SK-N-SH (cell line): ENCODE measurements at regions of chr2 and their contacts with region 1.

Region 1: GRCh38 chr2:135997380-135997779 is 12.0 kb upstream of the DARS1 start:
- DNase-seq: peak; percentile 83
- H3K4me3 ChIP-seq: no peak overlapping the region
- H3K27ac ChIP-seq: peak overlapping the region in 1 of 2 experiments; percentile 5; a peak in 1 of 4 replicates
- H3K4me1 ChIP-seq: peaks cover 0 to 7% of the 10 kb centered on the region in 2 experiments; a peak in 1 of 4 replicates
- H3K27me3 ChIP-seq: no peaks in the 10 kb centered on the region
- CTCF ChIP-seq: no peak
- EP300 ChIP-seq: no peak
- RAD21 ChIP-seq: peak; percentile 90

Region 2: GRCh38 chr2:135829378-135830135 is 167.8 kb before region 1 on chr2:
- CTCF ChIA-PET with region 1: no interaction called
- POLR2A ChIA-PET with region 1: no interaction called
- DNase-seq: no peak
- H3K4me3 ChIP-seq: no peak overlapping the region
- H3K27ac ChIP-seq: no peak overlapping the region
- H3K4me1 ChIP-seq: no peaks in the 10 kb centered on the region; a peak in 1 of 4 replicates
- H3K27me3 ChIP-seq: no peaks in the 10 kb centered on the region
- CTCF ChIP-seq: no peak
- EP300 ChIP-seq: no peak
- RAD21 ChIP-seq: no peak

Region 3: GRCh38 chr2:135913727-135914365 is 83.5 kb before region 1 on chr2:
- CTCF ChIA-PET with region 1: interaction called, 20 read pairs
- POLR2A ChIA-PET with region 1: no interaction called
- DNase-seq: peak; percentile 21
- H3K4me3 ChIP-seq: no peak overlapping the region
- H3K27ac ChIP-seq: no peak overlapping the region
- H3K4me1 ChIP-seq: no peaks in the 10 kb centered on the region; a peak in 1 of 4 replicates
- H3K27me3 ChIP-seq: no peaks in the 10 kb centered on the region
- CTCF ChIP-seq: peak; percentile 88
- EP300 ChIP-seq: no peak
- RAD21 ChIP-seq: peak; percentile 73

Region 4: GRCh38 chr2:135985018-135985825 is 12.2 kb before region 1 on chr2 and contains the start of gene DARS1:
- CTCF ChIA-PET with region 1: interaction called, 25 read pairs
- POLR2A ChIA-PET with region 1: no interaction called
- DNase-seq: peak; percentile 95
- H3K4me3 ChIP-seq: peak within 1 kb of the TSS; percentile 66 to 98
- H3K27ac ChIP-seq: peak within 1 kb of the TSS; percentile 88 to 98
- H3K4me1 ChIP-seq: peaks cover 3 to 14% of the 10 kb centered on the region in 2 experiments; a peak in 3 of 4 replicates
- H3K27me3 ChIP-seq: no peaks in the 10 kb centered on the region
- CTCF ChIP-seq: no peak
- EP300 ChIP-seq: no peak
- RAD21 ChIP-seq: no peak; the same call in 1 of the 2 replicates
- polyA plus RNA-seq, gene DARS1: 52.2 and 68.8 TPM in 2 replicates

Region 5: DNA sequence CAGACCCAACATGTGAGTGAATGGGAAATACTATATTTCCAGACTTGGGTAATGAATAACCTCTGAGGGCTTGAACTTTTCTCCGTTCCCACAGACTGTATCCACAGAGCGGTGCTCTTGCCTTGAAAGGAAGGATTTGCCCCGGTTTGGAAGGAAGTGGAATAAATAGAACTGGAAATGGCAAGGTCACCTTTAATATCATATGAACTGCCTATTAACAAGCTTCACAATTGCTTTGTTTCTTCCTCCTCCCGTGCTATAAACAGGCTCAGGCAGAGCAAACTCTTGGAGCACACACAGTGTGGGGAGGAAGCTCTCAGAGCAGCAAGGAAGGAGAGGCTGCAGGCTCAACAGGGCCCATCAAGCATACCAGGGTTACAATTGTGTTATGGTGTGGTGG is 16.6 kb after region 1 on chr2:
- CTCF ChIA-PET with region 1: interaction called, 17 read pairs
- POLR2A ChIA-PET with region 1: no interaction called
- DNase-seq: no peak
- H3K4me3 ChIP-seq: no peak overlapping the region
- H3K27ac ChIP-seq: no peak overlapping the region
- H3K4me1 ChIP-seq: no peaks in the 10 kb centered on the region; a peak in 1 of 4 replicates
- H3K27me3 ChIP-seq: no peaks in the 10 kb centered on the region; the same call in 1 of the 2 replicates
- CTCF ChIP-seq: no peak
- EP300 ChIP-seq: no peak
- RAD21 ChIP-seq: no peak; the same call in 1 of the 2 replicates

Region 6: GRCh38 chr2:136068581-136069227 is 71.3 kb after region 1 on chr2:
- CTCF ChIA-PET with region 1: interaction called, 15 read pairs
- POLR2A ChIA-PET with region 1: interaction called, 5 read pairs
- DNase-seq: no peak
- H3K4me3 ChIP-seq: no peak overlapping the region
- H3K27ac ChIP-seq: peak overlapping the region in 1 of 2 experiments; percentile 92; a peak in 2 of 4 replicates
- H3K4me1 ChIP-seq: peaks cover 0 to 47% of the 10 kb centered on the region in 2 experiments; a peak in 2 of 4 replicates
- H3K27me3 ChIP-seq: no peaks in the 10 kb centered on the region
- CTCF ChIP-seq: no peak
- EP300 ChIP-seq: no peak
- RAD21 ChIP-seq: no peak

Region 7: DNA sequence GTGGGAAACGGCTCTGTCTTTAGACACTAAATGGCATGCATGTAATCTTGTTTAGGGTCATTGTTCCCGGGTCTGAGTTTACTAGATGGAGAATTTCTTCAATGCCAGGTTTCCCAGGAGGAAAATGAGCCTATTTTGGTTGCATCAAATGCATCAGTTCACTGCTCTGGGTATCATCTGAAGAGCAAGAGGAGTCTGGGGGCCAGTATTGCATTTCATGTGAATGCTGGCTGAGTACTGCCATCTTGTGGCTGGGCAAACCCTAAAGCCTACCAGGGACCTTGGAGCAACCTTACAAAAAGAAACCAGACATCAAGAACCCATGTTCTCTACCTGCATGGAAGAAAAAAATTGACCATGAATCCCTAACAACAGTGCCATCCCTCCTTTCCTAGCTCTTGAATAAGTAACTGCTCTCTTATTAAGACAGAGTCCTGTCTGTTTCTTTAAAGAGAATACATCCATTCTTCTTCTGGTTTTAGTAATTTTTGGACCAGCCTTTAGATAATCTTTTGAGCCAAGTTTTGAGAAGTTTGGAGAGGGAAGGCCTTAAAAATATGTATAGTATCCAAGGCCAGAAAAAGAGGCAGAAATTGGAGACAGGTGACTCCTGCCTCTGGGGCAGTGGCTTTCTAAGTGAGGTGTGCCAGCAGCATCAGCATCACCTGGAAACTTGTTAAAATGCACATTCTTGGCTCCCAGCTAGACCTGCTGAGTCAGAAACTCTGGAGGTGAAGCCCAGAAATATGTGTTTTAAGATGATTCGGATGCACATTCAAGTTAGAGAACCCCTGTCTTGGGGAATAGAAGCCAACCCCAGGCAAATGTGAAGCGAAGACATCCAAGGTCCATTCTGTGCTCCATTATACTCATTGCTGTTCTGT is 381.6 kb after region 1 on chr2:
- CTCF ChIA-PET with region 1: interaction called, 46 read pairs
- POLR2A ChIA-PET with region 1: interaction called, 3 read pairs
- DNase-seq: peak; percentile 61
- H3K4me3 ChIP-seq: no peak overlapping the region; a peak in 1 of 4 replicates
- H3K27ac ChIP-seq: no peak overlapping the region
- H3K4me1 ChIP-seq: no peaks in the 10 kb centered on the region; a peak in 2 of 4 replicates
- H3K27me3 ChIP-seq: no peaks in the 10 kb centered on the region
- CTCF ChIP-seq: peak; percentile 49
- EP300 ChIP-seq: no peak
- RAD21 ChIP-seq: peak; percentile 95

Region 8: GRCh38 chr2:136384531-136385303 is 387.3 kb after region 1 on chr2:
- CTCF ChIA-PET with region 1: interaction called, 46 read pairs
- POLR2A ChIA-PET with region 1: interaction called, 3 read pairs
- DNase-seq: peak; percentile 45
- H3K4me3 ChIP-seq: no peak overlapping the region
- H3K27ac ChIP-seq: no peak overlapping the region
- H3K4me1 ChIP-seq: no peaks in the 10 kb centered on the region; a peak in 1 of 4 replicates
- H3K27me3 ChIP-seq: no peaks in the 10 kb centered on the region
- CTCF ChIP-seq: peak; percentile 45
- EP300 ChIP-seq: no peak
- RAD21 ChIP-seq: peak; percentile 83